K562 (cell line): ENCODE measurements at regions of chr12 and their contacts with region 1.

Region 1: GRCh38 chr12:110826592-110827200 is 20.1 kb upstream of the CCDC63 start:
- DNase-seq: peak; percentile 84 to 92 (median 90)
- ATAC-seq: peak; percentile 99
- H3K4me3 ChIP-seq: peak overlapping the region; percentile 17; the same call in 1 of the 2 replicates
- H3K27ac ChIP-seq: no peak overlapping the region; the same call in 2 of the 3 replicates
- H3K4me1 ChIP-seq: peaks cover 4% of the 10 kb centered on the region in 2 experiments; a peak in 2 of 5 replicates
- H3K27me3 ChIP-seq: peaks cover 9 to 42% of the 10 kb centered on the region in 2 experiments; a peak in 3 of 5 replicates
- CTCF ChIP-seq: peak; percentile 99
- EP300 ChIP-seq: no peak
- POLR2A ChIP-seq: no peak
- RAD21 ChIP-seq: peak; percentile 97 to 98

Region 2: DNA sequence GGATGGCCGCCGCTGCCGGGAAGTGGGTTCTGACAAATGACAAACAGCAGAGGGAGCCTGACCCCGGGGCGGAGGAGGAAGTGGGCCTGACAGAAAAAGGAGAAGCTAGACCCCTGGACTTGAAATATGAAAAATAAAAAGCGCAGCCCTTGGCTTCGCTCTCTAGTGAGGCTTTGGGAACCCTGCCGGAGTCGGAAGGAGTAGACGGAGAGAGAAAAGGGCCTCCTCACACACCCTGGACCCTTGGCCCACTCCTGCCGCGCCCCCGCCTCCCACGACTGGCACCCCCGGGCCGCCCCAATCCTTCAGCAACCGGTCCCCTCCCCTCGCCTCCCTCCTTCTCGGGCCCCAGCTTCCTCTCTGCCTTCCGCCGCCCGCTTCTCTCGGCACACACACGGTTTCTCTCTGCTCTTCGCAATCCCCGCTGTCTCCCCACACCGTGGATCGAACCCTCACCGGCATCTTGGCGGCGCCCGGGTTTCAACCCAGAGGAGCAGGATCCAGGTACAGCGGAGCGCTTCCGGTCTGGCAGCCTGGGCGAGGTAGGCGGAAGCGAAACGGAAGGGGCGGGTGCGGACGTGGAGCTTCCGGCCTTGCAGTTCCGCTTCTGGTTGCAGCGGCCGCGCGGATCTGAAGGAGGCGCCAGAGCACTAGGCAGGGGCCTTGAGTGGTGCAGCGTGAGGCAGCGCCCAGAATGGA is 376.7 kb before region 1 on chr12 and contains the start of gene ARPC3:
- CTCF ChIA-PET with region 1: interaction called, 12 read pairs
- POLR2A ChIA-PET with region 1: no interaction called
- in situ Hi-C with region 1: loop called (anchors 5 kb)
- intact Hi-C with region 1: loop called (anchors 5 kb)
- DNase-seq: peak; percentile 86 to 97 (median 89)
- ATAC-seq: peak; percentile 97
- H3K4me3 ChIP-seq: peak within 1 kb of the TSS; percentile 60
- H3K27ac ChIP-seq: peak within 1 kb of the TSS; percentile 82
- H3K4me1 ChIP-seq: peaks cover 6 to 13% of the 10 kb centered on the region in 2 experiments; a peak in 3 of 5 replicates
- H3K27me3 ChIP-seq: no peaks in the 10 kb centered on the region
- CTCF ChIP-seq: peak; percentile 94 to 97 (median 95)
- EP300 ChIP-seq: 0 out of 2 replicates have a peak, but pooled peaks have one; percentile 20
- POLR2A ChIP-seq: peak; percentile 94
- RAD21 ChIP-seq: peak; percentile 94 to 96
- polyA plus RNA-seq, gene ARPC3: 450 to 575 TPM

Region 3: DNA sequence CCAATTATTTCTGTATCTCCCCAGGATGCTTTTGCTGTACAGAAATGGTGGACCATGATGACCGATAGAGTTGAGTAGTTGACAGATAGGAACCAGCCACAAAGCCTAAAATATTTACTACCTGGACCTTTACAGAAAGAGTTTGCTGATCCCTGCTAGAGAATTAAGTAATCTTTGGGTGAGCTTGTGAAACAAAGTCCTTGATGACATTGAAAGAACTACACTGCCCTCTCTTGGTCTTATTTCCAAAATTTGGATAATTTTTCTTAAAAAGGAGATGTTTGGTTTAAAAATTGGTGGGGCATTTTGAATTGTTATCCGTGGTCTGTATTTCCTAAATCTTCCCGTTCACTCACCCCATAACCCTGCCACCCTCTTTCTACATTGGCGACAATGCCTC is 226.4 kb before region 1 on chr12:
- CTCF ChIA-PET with region 1: no interaction called
- POLR2A ChIA-PET with region 1: no interaction called
- in situ Hi-C with region 1: no loop called
- intact Hi-C with region 1: loop called (anchors 1 kb)
- DNase-seq: peak in 2 of 4 experiments; percentile 46 to 56
- ATAC-seq: peak; percentile 59
- H3K4me3 ChIP-seq: no peak overlapping the region
- H3K27ac ChIP-seq: no peak overlapping the region
- H3K4me1 ChIP-seq: no peaks in the 10 kb centered on the region
- H3K27me3 ChIP-seq: no peaks in the 10 kb centered on the region
- CTCF ChIP-seq: peak; percentile 41 to 80 (median 43); a peak in 5 of 6 replicates
- EP300 ChIP-seq: no peak
- POLR2A ChIP-seq: no peak
- RAD21 ChIP-seq: peak; percentile 86 to 94

Region 4: DNA sequence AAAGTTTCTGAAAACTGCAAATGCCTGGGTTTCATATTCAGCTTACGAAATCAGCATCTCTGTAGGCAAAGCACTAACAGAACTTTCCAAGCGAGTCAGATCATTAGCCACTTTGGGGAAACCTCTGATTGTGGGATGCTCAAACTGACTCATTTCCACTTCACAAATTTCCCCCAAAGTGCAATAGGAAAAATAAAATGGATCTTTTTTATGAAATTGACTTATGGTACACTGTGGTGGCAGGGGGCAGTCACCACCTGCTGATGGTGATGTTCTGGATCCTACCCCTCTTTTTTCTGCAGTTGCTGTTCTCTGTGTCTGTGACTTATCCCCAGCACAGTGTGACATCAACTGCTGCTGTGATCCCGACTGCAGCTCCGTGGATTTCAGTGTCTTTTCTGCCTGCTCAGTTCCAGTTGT is 207.2 kb before region 1 on chr12:
- CTCF ChIA-PET with region 1: no interaction called
- POLR2A ChIA-PET with region 1: no interaction called
- in situ Hi-C with region 1: loop called (anchors 10 kb)
- intact Hi-C with region 1: loop called (anchors 5 kb)
- DNase-seq: no peak
- ATAC-seq: peak; percentile 58; the same call in 1 of the 3 replicates
- H3K4me3 ChIP-seq: no peak overlapping the region
- H3K27ac ChIP-seq: no peak overlapping the region
- H3K4me1 ChIP-seq: peaks cover 0 to 3% of the 10 kb centered on the region in 2 experiments; a peak in 2 of 5 replicates
- H3K27me3 ChIP-seq: no peaks in the 10 kb centered on the region
- CTCF ChIP-seq: peak in 2 of 3 experiments; percentile 18 to 43; a peak in 3 of 6 replicates
- EP300 ChIP-seq: no peak
- POLR2A ChIP-seq: no peak
- RAD21 ChIP-seq: peak in 1 of 2 experiments; percentile 37; a peak in 2 of 4 replicates

Region 5: GRCh38 chr12:110657747-110658146 is 168.9 kb before region 1 on chr12:
- CTCF ChIA-PET with region 1: no interaction called
- POLR2A ChIA-PET with region 1: no interaction called
- in situ Hi-C with region 1: no loop called
- intact Hi-C with region 1: no loop called
- DNase-seq: no peak
- ATAC-seq: no peak
- H3K4me3 ChIP-seq: no peak overlapping the region
- H3K27ac ChIP-seq: no peak overlapping the region
- H3K4me1 ChIP-seq: peaks cover 0 to 6% of the 10 kb centered on the region in 2 experiments; a peak in 1 of 5 replicates
- H3K27me3 ChIP-seq: peaks cover 26 to 59% of the 10 kb centered on the region in 2 experiments; a peak in 4 of 5 replicates
- CTCF ChIP-seq: no peak
- EP300 ChIP-seq: no peak
- POLR2A ChIP-seq: no peak
- RAD21 ChIP-seq: no peak

Region 6: DNA sequence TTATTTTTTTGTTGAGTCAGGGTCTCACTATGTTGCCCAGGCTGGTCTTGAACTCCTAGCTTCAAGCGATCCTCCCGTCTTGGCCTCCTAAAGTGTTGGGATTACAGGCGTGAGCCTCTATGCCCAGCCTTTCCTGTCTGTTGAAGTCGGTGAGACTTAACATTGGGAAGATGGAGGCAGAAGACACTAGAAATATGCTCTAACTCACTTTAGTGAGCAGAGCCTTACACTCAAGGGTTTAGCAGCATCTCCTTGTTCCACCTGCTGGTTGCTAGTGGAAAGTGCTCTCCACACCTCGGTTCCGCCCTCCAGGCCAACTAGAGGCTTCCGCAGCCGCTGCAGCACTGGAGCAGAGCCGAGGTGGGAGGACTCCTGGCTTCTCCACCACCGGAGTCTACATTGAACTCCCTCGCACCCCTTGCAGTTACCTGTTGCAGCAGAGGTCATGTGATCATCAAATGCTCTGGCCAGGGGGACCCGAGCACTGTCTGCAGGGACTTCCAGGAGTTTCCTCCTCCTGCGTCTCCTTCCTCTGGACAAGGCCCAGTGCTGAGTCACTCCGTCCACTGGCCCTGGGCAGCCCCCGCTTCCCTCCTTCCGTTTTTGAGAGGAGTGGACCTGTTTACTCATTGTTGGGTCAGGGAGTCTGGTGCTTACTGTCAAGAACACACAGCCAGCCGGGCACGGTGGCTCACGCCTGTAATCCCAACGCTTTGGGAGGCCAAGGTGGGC is 128.4 kb before region 1 on chr12:
- CTCF ChIA-PET with region 1: no interaction called
- POLR2A ChIA-PET with region 1: no interaction called
- in situ Hi-C with region 1: no loop called
- intact Hi-C with region 1: loop called (anchors 2 kb)
- DNase-seq: peak; percentile 77 to 92 (median 78)
- ATAC-seq: peak; percentile 97
- H3K4me3 ChIP-seq: peak overlapping the region; percentile 10; the same call in 1 of the 2 replicates
- H3K27ac ChIP-seq: peak overlapping the region; percentile 72
- H3K4me1 ChIP-seq: peaks cover 35 to 42% of the 10 kb centered on the region in 2 experiments
- H3K27me3 ChIP-seq: no peaks in the 10 kb centered on the region
- CTCF ChIP-seq: peak; percentile 93 to 98 (median 96)
- EP300 ChIP-seq: peak; percentile 39; the same call in 1 of the 2 replicates
- POLR2A ChIP-seq: no peak; the same call in 1 of the 2 replicates
- RAD21 ChIP-seq: peak; percentile 86 to 88

Region 7: DNA sequence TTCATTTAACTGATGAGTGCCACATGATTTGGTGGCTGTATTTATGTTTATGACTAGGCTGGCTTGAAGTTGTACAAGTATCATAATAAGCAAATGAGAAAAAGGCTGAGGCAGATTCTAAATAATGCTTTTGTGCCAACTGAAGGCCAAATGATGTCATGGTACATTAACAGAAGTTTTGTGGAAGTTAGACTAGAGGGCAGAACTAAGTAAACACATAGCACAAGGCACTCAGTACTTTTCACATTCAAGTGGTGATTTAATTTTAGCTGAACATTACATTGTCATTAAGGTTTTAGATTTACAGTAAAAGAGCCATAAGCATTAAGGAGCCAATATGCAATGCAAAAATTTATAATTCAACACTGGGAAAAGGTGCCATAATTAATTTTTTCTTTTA is 105.1 kb before region 1 on chr12:
- CTCF ChIA-PET with region 1: no interaction called
- POLR2A ChIA-PET with region 1: no interaction called
- in situ Hi-C with region 1: loop called (anchors 5 kb)
- intact Hi-C with region 1: no loop called
- DNase-seq: no peak
- ATAC-seq: no peak
- H3K4me3 ChIP-seq: no peak overlapping the region
- H3K27ac ChIP-seq: no peak overlapping the region
- H3K4me1 ChIP-seq: no peaks in the 10 kb centered on the region
- H3K27me3 ChIP-seq: no peaks in the 10 kb centered on the region
- CTCF ChIP-seq: no peak
- EP300 ChIP-seq: no peak
- POLR2A ChIP-seq: no peak
- RAD21 ChIP-seq: no peak

Region 8: GRCh38 chr12:110809149-110809548 is 17.5 kb before region 1 on chr12:
- CTCF ChIA-PET with region 1: no interaction called
- POLR2A ChIA-PET with region 1: no interaction called
- in situ Hi-C with region 1: no loop called
- intact Hi-C with region 1: no loop called
- DNase-seq: no peak
- ATAC-seq: no peak
- H3K4me3 ChIP-seq: no peak overlapping the region
- H3K27ac ChIP-seq: no peak overlapping the region
- H3K4me1 ChIP-seq: no peaks in the 10 kb centered on the region
- H3K27me3 ChIP-seq: peaks cover 7 to 22% of the 10 kb centered on the region in 2 experiments; a peak in 4 of 5 replicates
- CTCF ChIP-seq: no peak
- EP300 ChIP-seq: no peak
- POLR2A ChIP-seq: no peak
- RAD21 ChIP-seq: no peak

Region 9: GRCh38 chr12:110888256-110888991 is 61.7 kb after region 1 on chr12:
- CTCF ChIA-PET with region 1: interaction called, 4 read pairs
- POLR2A ChIA-PET with region 1: no interaction called
- in situ Hi-C with region 1: no loop called
- intact Hi-C with region 1: loop called (anchors 5 kb)
- DNase-seq: no peak
- ATAC-seq: no peak
- H3K4me3 ChIP-seq: no peak overlapping the region
- H3K27ac ChIP-seq: no peak overlapping the region
- H3K4me1 ChIP-seq: no peaks in the 10 kb centered on the region
- H3K27me3 ChIP-seq: peaks cover 3 to 18% of the 10 kb centered on the region in 2 experiments
- CTCF ChIP-seq: no peak
- EP300 ChIP-seq: no peak
- POLR2A ChIP-seq: no peak
- RAD21 ChIP-seq: no peak